ENCODE measurements at regions of chr14 and their contacts with region 1.

Region 1: DNA sequence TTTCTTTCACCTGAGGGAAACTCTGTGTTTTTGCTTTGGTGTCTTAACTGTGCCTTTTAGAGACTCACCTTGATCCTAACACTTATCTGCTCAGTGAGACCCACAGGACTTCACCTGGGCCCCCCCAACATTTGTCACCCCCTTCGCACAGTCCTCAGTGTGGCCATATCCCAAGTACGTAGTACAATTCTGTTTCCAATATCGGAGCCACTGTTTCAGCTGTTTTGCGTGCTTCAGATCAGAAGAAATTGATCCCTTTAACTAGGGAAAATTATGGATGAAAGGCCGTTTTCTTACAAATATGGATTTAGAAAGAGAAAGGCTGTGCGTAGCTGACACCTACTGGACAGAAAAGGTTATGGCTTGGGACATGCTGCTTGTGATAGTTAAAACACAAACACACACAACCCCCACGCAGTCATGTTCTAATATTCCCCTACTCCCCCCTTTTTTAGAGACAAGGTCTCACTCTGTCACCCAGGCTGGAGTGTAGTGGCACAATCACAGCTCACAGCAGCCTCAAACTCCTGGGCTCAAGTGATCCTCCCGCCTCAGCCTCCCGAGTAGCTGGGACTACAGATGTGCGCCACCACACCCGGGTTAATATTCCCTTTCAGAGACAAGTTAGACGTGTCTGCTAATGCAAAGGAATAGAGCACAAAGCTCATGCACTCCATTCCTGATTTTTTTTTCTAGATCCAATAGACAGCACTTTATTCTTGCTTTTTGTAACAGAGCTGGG is 3.6 kb upstream of the SLC7A8 start:
- DNase-seq: peak in 2 of 10 donors; percentile 44 to 74
- H3K4me3 ChIP-seq: no peak overlapping the region
- H3K27ac ChIP-seq: no peak overlapping the region
- H3K27me3 ChIP-seq: no peaks in the 10 kb centered on the region
- CTCF ChIP-seq: peak; percentile 64 to 94 (median 82)

Region 2: GRCh38 chr14:23068476-23069412 is 118.3 kb before region 1 on chr14:
- intact Hi-C with region 1: loop called in 1 of 2 experiments (anchors 2 kb)
- DNase-seq: peak in 8 of 10 donors; percentile 72 to 86 (median 79)
- H3K4me3 ChIP-seq: peak overlapping the region in 31 of 59 donors; percentile 1 to 46 (median 16)
- H3K27ac ChIP-seq: peak overlapping the region in 31 of 59 donors; percentile 4 to 93 (median 46)
- H3K27me3 ChIP-seq: no peaks in the 10 kb centered on the region
- CTCF ChIP-seq: peak; percentile 93 to 100 (median 98)

Region 3: GRCh38 chr14:23120541-23121251 is 66.4 kb before region 1 on chr14:
- intact Hi-C with region 1: loop called (anchors 1 kb)
- DNase-seq: peak; percentile 85 to 93 (median 90)
- H3K4me3 ChIP-seq: peak overlapping the region in 3 of 59 donors; percentile 2 to 34 (median 26)
- H3K27ac ChIP-seq: peak overlapping the region in 16 of 59 donors; percentile 2 to 60 (median 28)
- H3K27me3 ChIP-seq: peaks cover 0 to 8% (median 0%) of the 10 kb centered on the region in 45 donors
- CTCF ChIP-seq: peak; percentile 99 to 100 (median 100)

Region 4: DNA sequence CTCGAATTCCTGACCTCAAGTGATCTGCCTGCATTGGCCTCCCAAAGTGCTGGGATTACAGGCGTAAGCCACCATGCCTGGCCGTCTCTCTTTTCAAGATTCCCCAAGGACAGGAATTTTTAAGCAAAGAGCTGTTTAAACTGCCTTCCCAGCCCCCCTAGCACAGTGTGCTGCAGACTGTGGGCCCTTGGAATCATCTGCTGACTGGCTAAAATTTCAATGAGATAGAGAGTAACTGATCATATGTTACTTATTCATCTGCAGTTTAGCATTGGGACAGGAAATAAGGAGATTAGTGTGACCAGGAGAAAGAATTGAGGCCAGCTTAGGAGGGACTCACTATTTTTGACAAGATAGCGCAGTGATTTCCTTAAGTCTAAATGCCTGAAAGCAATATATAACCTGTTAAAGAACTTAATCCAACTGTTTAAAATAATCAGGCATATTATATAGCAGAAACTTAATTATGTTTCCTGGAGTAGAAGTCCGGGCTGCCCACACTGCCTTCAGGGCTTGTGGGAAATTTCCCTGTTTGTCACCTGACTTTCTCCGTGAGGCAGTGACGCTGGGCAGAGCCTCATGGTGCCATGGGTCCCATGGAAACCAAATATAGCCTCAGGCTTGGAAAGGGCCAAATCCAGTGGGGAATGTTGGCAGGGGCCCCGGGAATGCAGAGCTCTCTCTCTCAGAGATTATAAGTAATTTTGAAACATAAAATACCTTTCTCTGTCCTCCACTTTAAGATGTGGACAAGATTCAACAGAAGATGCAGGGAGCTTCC is 45.2 kb before region 1 on chr14:
- intact Hi-C with region 1: no loop called
- DNase-seq: peak in 2 of 10 donors; percentile 17 to 40
- H3K4me3 ChIP-seq: no peak overlapping the region
- H3K27ac ChIP-seq: peak overlapping the region in 10 of 59 donors; percentile 2 to 61 (median 28)
- H3K27me3 ChIP-seq: no peaks in the 10 kb centered on the region
- CTCF ChIP-seq: no peak

Region 5: GRCh38 chr14:23209651-23210423 is 22.8 kb after region 1 on chr14:
- intact Hi-C with region 1: no loop called
- DNase-seq: no peak
- H3K4me3 ChIP-seq: no peak overlapping the region
- H3K27ac ChIP-seq: peak overlapping the region in 1 of 59 donors; percentile 12
- H3K27me3 ChIP-seq: no peaks in the 10 kb centered on the region
- CTCF ChIP-seq: no peak